Right cardiac atrium (tissue), 5 donors: ENCODE measurements at regions of chr17 and their contacts with region 1.

Region 1: DNA sequence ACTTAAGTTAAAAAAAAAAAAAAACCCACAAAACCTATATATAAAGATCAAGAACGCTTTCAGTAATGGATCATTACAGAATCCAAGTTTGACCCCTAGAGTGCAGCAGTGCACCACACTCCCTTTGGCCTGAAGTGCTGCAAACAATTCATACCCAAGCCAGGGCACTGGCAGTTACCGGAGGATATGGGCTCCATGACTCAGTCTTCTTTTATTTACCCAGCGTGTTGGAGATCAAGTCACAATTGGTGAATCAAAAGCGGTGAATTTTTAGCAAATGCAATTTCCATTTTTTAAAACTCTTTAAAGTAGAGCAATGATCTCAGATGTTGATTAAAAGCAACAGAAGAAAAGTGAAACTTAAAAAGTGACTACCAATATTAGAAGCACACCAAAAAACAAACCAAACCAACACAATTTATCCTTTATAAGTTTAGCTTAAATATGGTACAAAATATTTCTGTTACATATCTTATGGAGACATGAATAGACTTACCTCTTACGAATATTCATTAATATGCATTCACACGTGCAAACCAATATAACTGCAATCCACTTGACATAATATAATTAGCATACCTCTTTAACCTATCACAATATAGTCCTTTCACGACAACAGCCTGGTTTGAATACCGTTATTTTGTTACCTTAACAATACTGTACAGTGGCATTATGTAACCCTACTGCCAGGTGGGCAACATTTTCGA is 46.3 kb downstream of the ZNF652 start:
- DNase-seq: peak; percentile 69 to 81 (median 78)
- ATAC-seq: peak; percentile 98
- H3K4me3 ChIP-seq: no peak overlapping the region
- H3K27ac ChIP-seq: no peak overlapping the region
- H3K4me1 ChIP-seq: no peaks in the 10 kb centered on the region
- H3K27me3 ChIP-seq: no peaks in the 10 kb centered on the region

Region 2: DNA sequence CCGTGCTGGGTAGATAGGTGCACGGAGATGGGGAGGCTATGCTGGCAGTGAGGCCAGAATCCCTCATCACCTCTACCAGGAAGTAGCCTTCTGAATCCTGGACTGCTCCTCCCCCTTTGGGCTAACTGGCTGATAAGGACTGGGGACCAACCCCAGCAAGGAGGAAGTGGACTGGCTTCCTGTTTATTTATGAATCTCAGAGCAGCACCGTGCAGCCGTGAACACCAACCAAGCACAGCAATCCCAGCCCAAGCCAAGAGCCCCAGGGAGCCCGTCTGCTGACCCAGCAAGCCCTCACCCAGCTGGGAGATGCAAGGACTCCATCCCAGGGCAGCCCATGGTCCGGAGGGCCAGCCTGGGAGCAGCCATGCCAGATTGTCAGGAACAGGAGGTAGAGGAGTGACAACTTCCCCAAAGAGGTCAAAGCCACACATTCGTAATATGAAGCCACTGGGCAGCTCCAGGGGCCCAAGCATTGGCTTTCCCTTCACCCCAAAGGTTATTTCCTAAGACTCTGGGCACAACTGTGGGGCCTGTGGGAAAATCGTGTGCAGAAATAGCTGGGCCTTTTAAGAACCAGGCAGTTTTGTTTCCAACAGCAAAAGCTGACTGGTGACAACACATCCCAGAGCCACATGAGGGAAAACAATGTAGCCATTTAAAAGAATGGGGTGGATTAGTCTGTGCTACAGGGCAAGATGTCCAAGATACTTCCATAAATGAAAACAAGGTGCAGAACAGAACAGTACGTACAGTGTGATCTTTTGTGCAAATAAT is 75.0 kb after region 1 on chr17:
- intact Hi-C with region 1: loop called in 3 of 4 experiments (anchors 1 to 5 kb)
- DNase-seq: peak in 2 of 3 donors; percentile 59
- ATAC-seq: peak; percentile 44 to 73
- H3K4me3 ChIP-seq: no peak overlapping the region
- H3K27ac ChIP-seq: peak overlapping the region; percentile 7
- H3K4me1 ChIP-seq: no peaks in the 10 kb centered on the region
- H3K27me3 ChIP-seq: no peaks in the 10 kb centered on the region

Region 3: GRCh38 chr17:49399995-49400394 is 84.3 kb after region 1 on chr17:
- intact Hi-C with region 1: loop called (anchors 1 to 5 kb)
- DNase-seq: no peak
- ATAC-seq: no peak
- H3K4me3 ChIP-seq: no peak overlapping the region
- H3K27ac ChIP-seq: no peak overlapping the region
- H3K4me1 ChIP-seq: no peaks in the 10 kb centered on the region
- H3K27me3 ChIP-seq: no peaks in the 10 kb centered on the region

Region 4: GRCh38 chr17:49556223-49556971 is 240.7 kb after region 1 on chr17:
- intact Hi-C with region 1: loop called in 1 of 4 experiments (anchors 5 kb)
- DNase-seq: peak; percentile 81 to 93 (median 92)
- ATAC-seq: peak; percentile 89 to 90
- H3K4me3 ChIP-seq: no peak overlapping the region
- H3K27ac ChIP-seq: no peak overlapping the region
- H3K4me1 ChIP-seq: no peaks in the 10 kb centered on the region
- H3K27me3 ChIP-seq: no peaks in the 10 kb centered on the region